Naive thymus-derived CD4-positive, alpha-beta T cell (primary cell): ENCODE measurements at regions of chr1 and their contacts with region 1.

Region 1: GRCh38 chr1:211675230-211676105 is at the start of gene NEK2:
- DNase-seq: peak; percentile 53 to 90 (median 85)
- ATAC-seq: peak; percentile 97
- H3K4me3 ChIP-seq: peak within 1 kb of the TSS; percentile 76
- H3K4me3 Mint-ChIP-seq: peak within 1 kb of the TSS; percentile 88 to 96 (median 92)
- H3K27ac ChIP-seq: peak within 1 kb of the TSS; percentile 56
- H3K27ac Mint-ChIP-seq: peak within 1 kb of the TSS; percentile 45 to 88 (median 80)
- H3K4me1 ChIP-seq: peaks cover 5 to 7% of the 10 kb centered on the region in 2 donors
- H3K4me1 Mint-ChIP-seq: peaks cover 8 to 38% (median 13%) of the 10 kb centered on the region in 7 donors
- H3K27me3 ChIP-seq: no peaks in the 10 kb centered on the region
- H3K27me3 Mint-ChIP-seq: no peaks in the 10 kb centered on the region
- total RNA-seq, gene NEK2: 0.16 to 26.5 (median 0.25) TPM in 4 of 5 experiments, not detected in the other

Region 2: DNA sequence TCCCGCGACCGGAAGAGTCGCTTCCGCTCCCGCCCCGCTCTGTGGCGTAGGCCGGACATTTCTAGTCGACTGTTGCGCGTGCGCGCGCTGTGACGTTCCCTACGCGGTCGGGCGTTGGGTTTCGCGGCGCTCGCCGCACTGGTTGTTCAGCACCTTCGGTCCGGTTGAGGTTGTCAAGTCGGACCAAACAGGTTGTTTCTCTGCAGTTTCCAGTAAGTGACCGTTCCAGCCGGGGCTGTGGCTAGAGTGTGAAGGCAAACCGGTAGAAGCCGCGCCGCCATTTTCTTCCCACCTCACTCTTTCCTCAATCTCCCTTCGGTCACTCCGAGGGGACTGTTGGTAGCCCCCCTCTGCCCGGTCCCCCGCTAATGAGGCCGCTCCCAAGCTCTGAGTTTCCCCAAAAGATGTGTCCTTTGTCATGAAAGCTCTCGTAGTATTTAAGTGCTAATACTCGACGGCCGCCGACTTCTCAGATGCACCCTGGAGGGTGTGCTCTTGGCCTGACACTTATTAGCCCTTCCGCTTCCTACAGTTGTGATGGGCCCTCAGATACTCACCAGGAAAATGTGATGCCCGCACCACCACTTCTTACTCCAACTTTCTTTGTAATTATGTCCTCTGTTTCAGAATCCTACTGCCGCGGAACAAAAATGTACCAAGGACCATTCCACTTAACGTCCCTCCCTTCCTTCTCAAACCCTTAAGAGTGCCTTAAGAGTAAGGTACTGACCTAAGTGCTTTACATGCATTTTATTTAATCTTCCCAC is 292.6 kb before region 1 on chr1:
- CTCF ChIA-PET with region 1: no interaction called
- POLR2A ChIA-PET with region 1: no interaction called
- intact Hi-C with region 1: loop called in 1 of 2 experiments (anchors 1 kb)
- DNase-seq: peak; percentile 53 to 85 (median 64)
- ATAC-seq: peak; percentile 94
- H3K4me3 ChIP-seq: peak overlapping the region; percentile 77
- H3K4me3 Mint-ChIP-seq: peak overlapping the region; percentile 87 to 97 (median 92)
- H3K27ac ChIP-seq: peak overlapping the region; percentile 80
- H3K27ac Mint-ChIP-seq: peak overlapping the region; percentile 92 to 98 (median 95)
- H3K4me1 ChIP-seq: peaks cover 5% of the 10 kb centered on the region in 2 donors
- H3K4me1 Mint-ChIP-seq: peaks cover 0 to 39% (median 31%) of the 10 kb centered on the region in 7 donors
- H3K27me3 ChIP-seq: no peaks in the 10 kb centered on the region
- H3K27me3 Mint-ChIP-seq: peaks cover 0 to 5% (median 0%) of the 10 kb centered on the region in 5 donors

Region 3: DNA sequence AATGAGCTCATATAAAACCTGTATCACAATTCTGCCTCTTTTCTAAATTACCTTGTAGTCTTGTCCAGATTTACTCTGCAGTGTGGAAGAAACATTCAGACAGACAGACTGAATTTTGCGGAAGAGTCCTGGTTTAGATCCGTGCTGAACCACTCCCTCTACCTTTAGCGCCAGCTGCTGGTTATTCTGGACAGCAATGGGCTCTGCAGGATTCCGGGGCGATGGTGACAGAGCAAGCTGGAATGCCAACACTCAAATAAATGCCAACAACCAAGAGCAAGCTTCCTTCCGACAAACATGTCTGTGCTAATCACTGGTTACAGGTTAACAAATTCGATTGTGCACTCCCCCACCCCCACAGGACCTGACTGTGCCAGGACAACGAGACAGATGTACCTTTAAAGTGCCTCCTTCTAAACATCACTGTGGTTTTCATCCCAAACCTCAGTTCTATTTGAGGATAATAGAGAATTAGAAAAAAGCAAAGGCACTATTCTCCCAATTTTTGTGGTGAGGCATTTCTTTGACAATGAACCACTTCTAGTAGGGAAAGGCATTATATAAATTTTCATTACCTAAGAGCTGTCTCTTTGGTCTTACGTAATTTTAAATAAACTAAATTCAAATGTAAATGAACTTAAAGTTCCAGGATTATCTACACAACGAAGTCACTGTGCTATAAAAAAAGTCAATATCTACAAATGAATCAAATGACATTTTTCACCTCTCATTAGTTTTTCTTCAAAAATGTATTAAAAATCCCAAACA is 269.4 kb after region 1 on chr1:
- CTCF ChIA-PET with region 1: no interaction called
- POLR2A ChIA-PET with region 1: no interaction called
- intact Hi-C with region 1: loop called in 1 of 2 experiments (anchors 5 kb)
- DNase-seq: no peak
- ATAC-seq: no peak
- H3K4me3 ChIP-seq: no peak overlapping the region
- H3K4me3 Mint-ChIP-seq: no peak overlapping the region
- H3K27ac ChIP-seq: no peak overlapping the region
- H3K27ac Mint-ChIP-seq: peak overlapping the region in 1 of 9 donors; percentile 31
- H3K4me1 ChIP-seq: no peaks in the 10 kb centered on the region
- H3K4me1 Mint-ChIP-seq: peaks cover 0 to 12% (median 4%) of the 10 kb centered on the region in 7 donors
- H3K27me3 ChIP-seq: no peaks in the 10 kb centered on the region
- H3K27me3 Mint-ChIP-seq: no peaks in the 10 kb centered on the region

Region 4: DNA sequence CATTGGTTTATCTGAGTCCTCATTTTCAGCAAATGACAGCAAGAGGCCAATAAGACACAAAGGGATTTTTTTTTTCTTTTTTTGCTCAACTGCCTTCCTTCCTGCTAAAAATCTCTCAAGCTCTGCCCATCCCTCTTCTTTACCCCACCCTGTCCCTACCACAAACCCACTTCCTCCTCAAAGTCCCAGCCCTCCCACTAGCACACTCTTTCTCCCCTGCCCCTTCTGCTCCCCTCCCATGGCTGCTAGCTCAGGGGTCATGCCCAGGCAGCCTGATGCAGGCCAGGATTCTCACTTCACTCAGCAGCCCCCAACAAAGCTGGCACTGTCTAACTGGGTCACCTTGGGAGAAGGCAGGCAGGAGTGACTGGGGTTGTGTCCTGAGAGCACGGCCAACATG is 580.9 kb after region 1 on chr1:
- CTCF ChIA-PET with region 1: no interaction called
- POLR2A ChIA-PET with region 1: no interaction called
- intact Hi-C with region 1: no loop called
- DNase-seq: peak in 8 of 9 donors; percentile 30 to 73 (median 64)
- ATAC-seq: peak; percentile 87
- H3K4me3 ChIP-seq: peak overlapping the region; percentile 31
- H3K4me3 Mint-ChIP-seq: peak overlapping the region; percentile 67 to 89 (median 82)
- H3K27ac ChIP-seq: no peak overlapping the region
- H3K27ac Mint-ChIP-seq: peak overlapping the region; percentile 36 to 88 (median 80)
- H3K4me1 ChIP-seq: peaks cover 56 to 60% of the 10 kb centered on the region in 2 donors
- H3K4me1 Mint-ChIP-seq: peaks cover 47 to 89% (median 76%) of the 10 kb centered on the region in 7 donors
- H3K27me3 ChIP-seq: no peaks in the 10 kb centered on the region
- H3K27me3 Mint-ChIP-seq: no peaks in the 10 kb centered on the region

Region 5: DNA sequence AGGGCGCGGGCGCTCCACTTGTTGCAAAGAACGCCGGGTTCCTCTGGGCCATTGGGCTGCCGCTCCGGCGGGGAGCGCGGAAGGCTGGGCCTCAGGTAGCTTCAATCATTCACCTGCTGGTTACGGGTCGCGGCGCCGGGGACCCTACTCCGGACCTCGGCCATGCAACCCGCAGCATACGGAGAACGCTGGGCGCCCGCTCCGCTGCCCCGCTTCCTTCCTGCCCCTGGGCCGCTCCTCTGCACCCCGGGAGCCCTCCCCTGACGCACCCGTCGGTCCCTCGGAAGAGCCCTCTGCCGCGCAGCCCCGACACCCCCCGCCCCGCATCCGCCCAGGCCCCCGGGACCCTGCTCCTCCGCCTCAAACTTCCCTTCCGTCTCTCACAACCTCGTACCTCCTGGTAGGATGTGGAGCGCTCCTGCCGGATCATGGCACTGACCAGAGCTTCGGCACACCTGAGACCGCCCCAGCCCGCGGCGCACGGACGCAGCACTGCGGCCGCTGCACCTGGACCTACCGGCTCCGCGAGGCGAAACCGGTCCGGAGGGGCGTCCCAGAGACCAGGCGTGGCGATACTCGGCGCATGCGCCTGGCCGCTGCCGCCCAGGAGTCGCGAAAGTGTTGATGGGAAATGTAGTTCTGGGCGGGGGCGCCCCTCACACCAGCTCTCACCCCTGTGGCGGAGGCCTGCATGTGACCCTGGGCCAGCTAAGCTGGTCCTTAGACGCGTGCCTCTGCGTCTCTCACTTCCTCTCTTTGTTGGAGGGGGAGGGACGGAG is 739.0 kb after region 1 on chr1 and contains the start of gene PACC1:
- CTCF ChIA-PET with region 1: no interaction called
- POLR2A ChIA-PET with region 1: no interaction called
- intact Hi-C with region 1: loop called (anchors 1 kb)
- DNase-seq: peak; percentile 77 to 89 (median 86)
- ATAC-seq: peak; percentile 98
- H3K4me3 ChIP-seq: peak within 1 kb of the TSS; percentile 98
- H3K4me3 Mint-ChIP-seq: peak within 1 kb of the TSS; percentile 87 to 100 (median 94)
- H3K27ac ChIP-seq: peak within 1 kb of the TSS; percentile 71
- H3K27ac Mint-ChIP-seq: peak within 1 kb of the TSS; percentile 74 to 94 (median 89)
- H3K4me1 ChIP-seq: peaks cover 15 to 19% of the 10 kb centered on the region in 2 donors
- H3K4me1 Mint-ChIP-seq: peaks cover 22 to 46% (median 40%) of the 10 kb centered on the region in 7 donors
- H3K27me3 ChIP-seq: no peaks in the 10 kb centered on the region
- H3K27me3 Mint-ChIP-seq: no peaks in the 10 kb centered on the region
- total RNA-seq, gene PACC1: 7.9 to 13.4 (median 12.0) TPM

Region 6: DNA sequence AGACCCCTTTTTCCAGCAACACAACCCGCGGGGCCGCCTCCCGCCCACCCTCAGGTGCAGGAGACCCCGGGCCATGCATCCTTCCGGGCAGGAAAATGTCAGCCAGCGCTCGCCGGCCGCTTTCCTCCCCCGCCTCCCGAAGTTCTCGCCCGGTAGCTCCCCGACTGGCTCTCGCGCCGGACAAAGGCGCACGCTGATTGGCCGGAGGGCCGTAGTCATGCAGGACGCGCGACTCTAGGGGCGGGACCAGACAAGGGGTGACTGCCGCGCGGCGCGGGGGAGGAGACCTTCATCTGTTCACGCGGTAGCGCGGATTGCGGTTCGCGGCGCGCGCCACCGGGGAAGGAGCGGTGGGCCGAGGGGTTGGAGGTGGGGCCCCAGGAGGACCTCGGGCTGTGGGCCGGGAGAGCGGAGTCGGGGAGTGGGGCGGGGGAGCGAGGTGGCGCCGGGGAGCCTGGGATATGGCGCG is 1182.6 kb after region 1 on chr1 and contains the start of gene FLVCR1:
- CTCF ChIA-PET with region 1: no interaction called
- POLR2A ChIA-PET with region 1: no interaction called
- intact Hi-C with region 1: loop called in 1 of 2 experiments (anchors 1 kb)
- DNase-seq: peak; percentile 74 to 96 (median 80)
- ATAC-seq: peak; percentile 99
- H3K4me3 ChIP-seq: peak within 1 kb of the TSS; percentile 72
- H3K4me3 Mint-ChIP-seq: peak within 1 kb of the TSS in 6 of 10 donors; percentile 95 to 97 (median 96)
- H3K27ac ChIP-seq: peak within 1 kb of the TSS; percentile 68
- H3K27ac Mint-ChIP-seq: peak within 1 kb of the TSS; percentile 77 to 96 (median 89)
- H3K4me1 ChIP-seq: peaks cover 9 to 16% of the 10 kb centered on the region in 2 donors
- H3K4me1 Mint-ChIP-seq: peaks cover 9 to 34% (median 21%) of the 10 kb centered on the region in 7 donors
- H3K27me3 ChIP-seq: no peaks in the 10 kb centered on the region
- H3K27me3 Mint-ChIP-seq: no peaks in the 10 kb centered on the region
- total RNA-seq, gene FLVCR1: 7.4 to 12.2 (median 8.2) TPM